T-cell (primary cell): ENCODE measurements at regions of chr3 and their contacts with region 1.

Region 1: DNA sequence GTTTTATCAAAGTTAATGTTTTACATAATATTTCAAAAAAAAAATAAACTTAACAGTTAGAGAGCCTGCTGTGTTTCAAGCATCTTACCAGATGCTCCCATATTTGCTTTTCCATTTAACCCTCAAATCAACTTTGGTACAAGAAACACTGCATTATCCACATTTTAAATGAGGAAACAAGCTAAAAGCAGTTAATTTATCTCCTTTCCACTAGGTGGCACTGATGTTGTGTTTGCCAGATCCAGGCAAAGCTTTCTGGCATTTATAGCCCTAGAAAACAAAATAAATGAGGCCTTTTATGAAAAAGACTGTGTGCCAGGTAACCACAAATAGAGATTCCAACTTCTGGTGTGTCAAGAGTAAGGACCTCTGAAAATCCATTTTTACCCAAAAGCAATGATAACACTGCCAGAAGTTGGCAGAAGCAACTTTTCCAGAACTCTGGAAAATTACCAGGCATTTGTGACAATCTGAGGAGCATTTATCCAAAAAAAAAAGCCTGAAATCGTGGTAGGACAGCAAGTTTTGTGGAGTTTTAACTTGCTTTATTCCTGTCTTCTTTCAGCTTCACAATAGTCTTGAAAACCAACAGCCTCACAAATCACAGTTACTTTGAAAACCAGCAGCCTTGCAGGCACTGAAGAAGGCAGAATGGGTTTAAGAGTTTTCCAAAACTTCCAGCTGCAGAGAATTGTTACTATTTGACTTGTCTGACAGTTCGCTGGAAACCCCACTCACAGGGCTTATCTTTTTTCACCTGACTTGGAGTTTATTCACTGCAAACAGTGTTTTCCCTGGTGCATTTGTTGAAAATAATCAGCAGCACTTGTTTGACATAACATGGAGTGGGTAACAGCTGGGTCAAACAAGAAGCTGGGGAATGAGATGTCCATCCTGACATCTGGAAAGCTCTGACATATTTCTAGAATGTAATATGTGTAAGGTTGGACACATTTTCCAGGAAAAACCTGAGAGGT is 9.2 kb downstream of the FAM162A start:
- DNase-seq: peak in 6 of 35 experiments; percentile 2 to 63 (median 12)
- ATAC-seq: no peak
- H3K4me3 ChIP-seq: no peak overlapping the region
- H3K4me3 Mint-ChIP-seq: no peak overlapping the region
- H3K27ac ChIP-seq: no peak overlapping the region
- H3K27ac Mint-ChIP-seq: no peak overlapping the region
- H3K4me1 ChIP-seq: no peaks in the 10 kb centered on the region
- H3K4me1 Mint-ChIP-seq: peaks cover 14 to 27% (median 16%) of the 10 kb centered on the region in 3 donors
- H3K27me3 ChIP-seq: no peaks in the 10 kb centered on the region
- H3K27me3 Mint-ChIP-seq: no peaks in the 10 kb centered on the region

Region 2: DNA sequence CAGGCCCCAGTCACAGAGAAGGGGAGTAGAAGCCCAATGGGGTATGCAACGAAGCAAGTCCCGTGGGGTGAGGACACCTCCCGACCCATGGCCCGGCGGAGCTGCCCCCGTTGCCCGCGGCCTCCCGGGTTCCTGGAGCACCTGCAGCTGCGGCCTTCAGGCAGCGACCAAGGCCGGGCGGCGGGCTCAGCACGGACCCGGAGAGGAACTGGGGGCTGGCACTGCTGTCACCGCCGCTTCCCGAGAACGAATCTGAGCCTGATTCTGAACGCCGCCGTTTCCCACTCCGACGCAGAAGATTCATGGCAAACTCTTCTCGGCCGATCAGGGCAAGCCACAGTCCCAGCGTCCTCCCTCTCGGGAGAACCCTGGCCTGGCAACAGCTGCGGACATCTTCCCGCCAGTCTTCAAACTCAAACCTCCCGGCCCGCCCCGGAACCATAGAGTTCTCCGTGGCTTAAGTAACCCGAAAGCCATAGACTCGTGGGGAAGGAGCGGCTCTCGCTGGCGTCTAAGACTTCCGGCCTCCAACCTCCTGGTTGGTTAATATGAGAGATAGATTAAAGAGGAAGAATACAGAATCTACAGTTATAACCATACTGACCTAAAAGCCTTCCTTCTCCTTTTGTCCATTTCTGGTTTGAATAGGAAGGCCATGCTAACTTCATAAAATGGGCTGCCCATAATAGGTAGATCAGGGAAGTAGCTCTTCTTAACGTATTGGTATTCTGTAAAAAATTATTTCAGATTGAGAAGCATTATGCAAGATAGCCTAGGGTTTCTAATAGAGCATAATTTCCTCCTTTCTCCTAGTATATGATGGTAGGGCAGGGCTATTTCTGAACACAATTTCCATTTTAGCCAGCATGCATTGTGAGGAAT is 847.3 kb before region 1 on chr3 and contains the start of gene POLQ:
- CTCF ChIA-PET with region 1: interaction called in 1 of 2 experiments, 10 read pairs
- POLR2A ChIA-PET with region 1: no interaction called
- DNase-seq: peak; percentile 65 to 91 (median 86)
- ATAC-seq: peak; percentile 98 to 99 (median 99)
- H3K4me3 ChIP-seq: peak within 1 kb of the TSS; percentile 63 to 95
- H3K4me3 Mint-ChIP-seq: peak within 1 kb of the TSS; percentile 88 to 93 (median 89)
- H3K27ac ChIP-seq: peak within 1 kb of the TSS; percentile 67
- H3K27ac Mint-ChIP-seq: peak within 1 kb of the TSS; percentile 91 to 93
- H3K4me1 ChIP-seq: peaks cover 6 to 9% of the 10 kb centered on the region in 2 experiments
- H3K4me1 Mint-ChIP-seq: peaks cover 10 to 21% (median 10%) of the 10 kb centered on the region in 3 donors
- H3K27me3 ChIP-seq: no peaks in the 10 kb centered on the region
- H3K27me3 Mint-ChIP-seq: no peaks in the 10 kb centered on the region
- total RNA-seq, gene POLQ: 0.23 to 1.1 (median 0.47) TPM

Region 3: GRCh38 chr3:122377975-122378374 is 15.2 kb before region 1 on chr3:
- CTCF ChIA-PET with region 1: interaction called, 10 to 12 read pairs
- POLR2A ChIA-PET with region 1: no interaction called
- DNase-seq: no peak
- ATAC-seq: no peak
- H3K4me3 ChIP-seq: no peak overlapping the region
- H3K4me3 Mint-ChIP-seq: no peak overlapping the region
- H3K27ac ChIP-seq: no peak overlapping the region
- H3K27ac Mint-ChIP-seq: no peak overlapping the region
- H3K4me1 ChIP-seq: peaks cover 4 to 6% of the 10 kb centered on the region in 2 experiments
- H3K4me1 Mint-ChIP-seq: peaks cover 13 to 20% (median 14%) of the 10 kb centered on the region in 3 donors
- H3K27me3 ChIP-seq: no peaks in the 10 kb centered on the region
- H3K27me3 Mint-ChIP-seq: no peaks in the 10 kb centered on the region

Region 4: DNA sequence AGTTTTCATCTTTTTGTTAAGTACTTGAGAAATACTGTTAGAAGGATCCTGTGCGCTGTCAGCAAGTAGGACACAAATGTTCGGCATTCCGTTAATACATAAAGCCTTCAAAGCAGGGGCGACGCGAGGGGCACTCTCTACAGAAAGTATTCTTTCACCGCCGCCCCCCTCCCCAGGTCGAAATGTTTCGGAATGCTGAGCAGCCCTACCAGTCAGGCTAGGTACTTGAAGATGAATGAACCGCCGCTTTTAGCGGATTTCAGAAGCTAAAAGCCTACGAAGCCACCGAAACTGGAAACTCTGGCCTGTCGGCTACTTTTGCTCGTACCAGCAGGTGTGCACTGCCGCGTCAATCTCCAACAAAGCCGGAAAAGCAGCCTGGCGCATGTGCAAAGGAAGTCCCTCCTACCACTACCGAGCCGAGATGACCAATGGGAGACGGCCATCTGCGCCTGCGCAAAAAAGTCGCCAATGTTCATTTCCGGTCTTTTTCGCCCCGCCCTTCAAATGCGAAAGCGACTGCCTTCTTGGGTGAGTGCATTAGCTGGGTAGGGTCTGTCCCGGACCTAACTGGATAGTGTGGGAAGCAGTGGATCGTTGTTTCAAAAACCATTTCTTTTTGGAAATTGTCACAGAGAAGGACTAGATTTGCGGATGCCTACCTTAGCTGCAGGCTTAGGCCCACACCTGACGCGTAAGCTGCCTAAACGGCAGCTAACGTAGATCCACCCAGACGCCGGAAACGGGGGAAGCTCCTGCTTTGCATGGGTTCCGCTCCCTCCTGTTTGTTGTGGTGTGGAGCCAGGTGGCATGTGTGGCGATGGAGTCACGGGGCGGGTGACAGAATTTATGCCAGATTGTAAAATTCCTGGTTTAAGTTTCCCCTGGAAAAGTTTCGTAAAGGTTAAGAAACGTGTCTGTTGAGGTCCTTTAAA is 22.8 kb after region 1 on chr3 and contains the start of gene WDR5B:
- CTCF ChIA-PET with region 1: interaction called in 1 of 2 experiments, 20 read pairs
- POLR2A ChIA-PET with region 1: interaction called, 3 to 5 read pairs
- DNase-seq: peak; percentile 91 to 100 (median 97)
- ATAC-seq: peak; percentile 91 to 93 (median 92)
- H3K4me3 ChIP-seq: peak within 1 kb of the TSS; percentile 65 to 86
- H3K4me3 Mint-ChIP-seq: peak within 1 kb of the TSS; percentile 95 to 99 (median 99)
- H3K27ac ChIP-seq: peak within 1 kb of the TSS; percentile 82
- H3K27ac Mint-ChIP-seq: peak within 1 kb of the TSS; percentile 100
- H3K4me1 ChIP-seq: peaks cover 14 to 15% of the 10 kb centered on the region in 2 experiments
- H3K4me1 Mint-ChIP-seq: peaks cover 45 to 66% (median 61%) of the 10 kb centered on the region in 3 donors
- H3K27me3 ChIP-seq: no peaks in the 10 kb centered on the region
- H3K27me3 Mint-ChIP-seq: no peaks in the 10 kb centered on the region
- total RNA-seq, gene WDR5B: 5.8 to 11.6 (median 10.0) TPM

Region 5: GRCh38 chr3:122679085-122679881 is 286.1 kb after region 1 on chr3:
- CTCF ChIA-PET with region 1: interaction called, 3 to 31 read pairs
- POLR2A ChIA-PET with region 1: interaction called in 1 of 2 experiments, 5 read pairs
- DNase-seq: peak; percentile 64 to 93 (median 78)
- ATAC-seq: peak; percentile 63 to 71 (median 67)
- H3K4me3 ChIP-seq: peak overlapping the region in 1 of 2 donors; percentile 96
- H3K4me3 Mint-ChIP-seq: peak overlapping the region; percentile 93 to 97 (median 94)
- H3K27ac ChIP-seq: peak overlapping the region; percentile 96
- H3K27ac Mint-ChIP-seq: peak overlapping the region; percentile 99 to 100
- H3K4me1 ChIP-seq: peaks cover 12 to 35% of the 10 kb centered on the region in 2 experiments
- H3K4me1 Mint-ChIP-seq: peaks cover 55 to 56% (median 56%) of the 10 kb centered on the region in 3 donors
- H3K27me3 ChIP-seq: no peaks in the 10 kb centered on the region
- H3K27me3 Mint-ChIP-seq: no peaks in the 10 kb centered on the region